HEK293T (cell line): ENCODE measurements at regions of chr1 and their contacts with region 1.

Region 1: GRCh38 chr1:171741872-171742576 is at the start of gene VAMP4:
- DNase-seq: peak; percentile 92

Region 2: DNA sequence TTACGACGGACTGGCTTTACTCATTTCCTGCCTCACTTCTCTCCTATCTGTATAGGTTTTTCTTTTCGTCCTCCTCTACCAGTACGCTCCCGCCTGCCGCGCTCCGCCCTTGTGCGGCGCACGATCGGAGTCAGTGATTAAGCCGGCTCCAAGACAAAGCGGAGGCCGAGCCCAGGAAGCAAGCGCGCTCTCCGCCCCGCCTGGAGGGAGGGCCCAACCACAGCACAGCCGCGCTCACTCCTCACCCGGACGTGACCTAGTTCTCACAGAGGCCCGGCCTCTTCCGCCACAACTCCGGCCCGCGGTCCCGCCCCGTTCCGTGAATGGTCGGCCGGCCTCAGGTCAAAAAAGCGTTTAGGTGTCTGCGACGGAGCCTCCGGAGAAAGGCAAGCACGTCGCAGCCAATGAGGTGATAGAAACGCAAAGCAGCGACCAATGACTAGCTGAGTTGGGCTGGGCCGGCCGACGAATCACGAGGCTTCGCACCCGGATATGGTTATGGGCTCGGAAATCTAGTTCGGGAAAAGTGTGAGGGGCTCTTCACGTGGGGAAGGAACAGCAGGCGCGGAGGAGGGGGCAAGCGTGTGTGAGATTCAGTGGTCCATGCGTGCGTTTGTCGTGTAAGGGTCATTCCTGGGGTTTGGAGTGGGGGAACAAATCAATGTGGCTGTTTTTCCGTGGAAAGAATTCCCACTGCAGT is 39.3 kb after region 1 on chr1 and contains the start of gene METTL13:
- CTCF ChIA-PET with region 1: no interaction called
- POLR2A ChIA-PET with region 1: interaction called, 17 read pairs
- DNase-seq: peak; percentile 98

Region 3: GRCh38 chr1:171929121-171929520 is 187.1 kb after region 1 on chr1:
- CTCF ChIA-PET with region 1: no interaction called
- POLR2A ChIA-PET with region 1: no interaction called
- DNase-seq: peak; percentile 13